PC-9 (cell line): ENCODE measurements at regions of chr19 and their contacts with region 1.

Region 1: GRCh38 chr19:17226002-17226933 is at the start of gene OCEL1:
- DNase-seq: peak; percentile 96
- H3K4me3 ChIP-seq: peak within 1 kb of the TSS; percentile 70
- H3K27ac ChIP-seq: peak within 1 kb of the TSS; percentile 76
- H3K4me1 ChIP-seq: no peaks in the 10 kb centered on the region; the same call in 1 of the 2 replicates
- H3K27me3 ChIP-seq: no peaks in the 10 kb centered on the region
- CTCF ChIP-seq: no peak
- total RNA-seq, gene OCEL1: 30.6 and 34.5 TPM in 2 replicates

Region 2: GRCh38 chr19:16518483-16519229 is 707.6 kb before region 1 on chr19:
- CTCF ChIA-PET with region 1: no interaction called
- POLR2A ChIA-PET with region 1: no interaction called
- intact Hi-C with region 1: no loop called
- DNase-seq: no peak
- H3K4me3 ChIP-seq: no peak overlapping the region
- H3K27ac ChIP-seq: no peak overlapping the region
- H3K4me1 ChIP-seq: no peaks in the 10 kb centered on the region
- H3K27me3 ChIP-seq: no peaks in the 10 kb centered on the region
- CTCF ChIP-seq: no peak; the same call in 1 of the 2 replicates

Region 3: DNA sequence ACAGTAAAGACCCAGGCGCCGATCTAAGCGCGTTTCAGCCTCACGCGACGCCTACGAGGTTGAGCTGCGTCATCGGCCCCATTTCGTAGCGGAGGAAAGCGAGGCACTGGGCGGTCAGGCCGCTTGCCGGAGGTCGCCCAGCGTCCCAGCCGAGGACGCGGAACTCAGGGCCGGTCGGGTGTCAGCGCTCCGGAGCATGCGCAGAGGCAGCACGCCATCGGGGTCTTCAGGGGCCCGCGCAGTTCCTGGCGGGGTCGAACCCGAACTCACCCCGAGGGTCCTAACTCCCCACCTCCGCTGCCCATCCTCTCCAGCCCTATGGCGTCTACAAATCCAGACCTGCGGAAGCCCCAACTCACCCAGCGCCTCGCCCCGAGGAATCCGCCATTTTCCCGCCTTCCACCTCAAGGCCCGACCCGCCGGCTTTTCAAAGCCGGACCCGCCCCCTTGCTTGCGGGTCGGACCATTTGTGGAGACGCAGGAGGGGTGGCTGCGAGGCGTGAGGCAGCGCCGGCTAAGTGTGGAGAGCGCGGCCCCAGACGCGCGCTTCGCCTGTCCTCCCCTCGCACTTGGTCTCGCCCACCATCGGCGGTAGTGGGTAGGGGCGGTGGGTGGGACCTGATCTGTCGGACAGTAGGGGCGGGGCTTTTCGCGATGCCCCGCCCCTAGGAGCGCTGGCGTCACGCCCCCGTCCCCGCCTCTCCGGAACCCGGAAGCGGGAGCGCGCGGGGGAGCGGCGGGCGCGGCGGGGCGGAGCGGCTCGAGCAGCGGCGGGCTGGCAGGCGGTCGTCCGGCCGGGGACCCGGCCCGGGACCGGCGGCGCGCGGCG is 151.0 kb before region 1 on chr19 and contains the starts of genes HAUS8 and MYO9B:
- CTCF ChIA-PET with region 1: no interaction called
- POLR2A ChIA-PET with region 1: no interaction called
- intact Hi-C with region 1: loop called (anchors 5 kb)
- DNase-seq: peak; percentile 97 to 99
- H3K4me3 ChIP-seq: peak within 1 kb of the TSS; percentile 86
- H3K27ac ChIP-seq: peak within 1 kb of the TSS; percentile 47
- H3K4me1 ChIP-seq: peaks cover 46% of the 10 kb centered on the region
- H3K27me3 ChIP-seq: no peaks in the 10 kb centered on the region
- CTCF ChIP-seq: no peak
- total RNA-seq, gene HAUS8: 26.5 and 30.8 TPM in 2 replicates
- total RNA-seq, gene MYO9B: 81.2 and 103 TPM in 2 replicates

Region 4: GRCh38 chr19:17260842-17261325 is 34.6 kb after region 1 on chr19:
- CTCF ChIA-PET with region 1: no interaction called
- POLR2A ChIA-PET with region 1: interaction called, 4 read pairs
- intact Hi-C with region 1: loop called (anchors 5 kb)
- DNase-seq: peak; percentile 87 to 88
- H3K4me3 ChIP-seq: no peak overlapping the region
- H3K27ac ChIP-seq: no peak overlapping the region
- H3K4me1 ChIP-seq: peaks cover 20% of the 10 kb centered on the region
- H3K27me3 ChIP-seq: no peaks in the 10 kb centered on the region
- CTCF ChIP-seq: peak; percentile 96

Region 5: GRCh38 chr19:17266975-17267788 is 40.9 kb after region 1 on chr19 and contains the start of gene BABAM1:
- CTCF ChIA-PET with region 1: no interaction called
- POLR2A ChIA-PET with region 1: interaction called, 25 read pairs
- intact Hi-C with region 1: loop called (anchors 5 kb)
- DNase-seq: peak; percentile 94 to 99
- H3K4me3 ChIP-seq: peak within 1 kb of the TSS; percentile 86
- H3K27ac ChIP-seq: peak within 1 kb of the TSS; percentile 70
- H3K4me1 ChIP-seq: peaks cover 25% of the 10 kb centered on the region
- H3K27me3 ChIP-seq: no peaks in the 10 kb centered on the region
- CTCF ChIP-seq: no peak
- total RNA-seq, gene BABAM1: 127 and 152 TPM in 2 replicates

Region 6: GRCh38 chr19:17370026-17370587 is 143.8 kb after region 1 on chr19:
- CTCF ChIA-PET with region 1: no interaction called
- POLR2A ChIA-PET with region 1: no interaction called
- intact Hi-C with region 1: no loop called
- DNase-seq: no peak
- H3K4me3 ChIP-seq: no peak overlapping the region
- H3K27ac ChIP-seq: no peak overlapping the region
- H3K4me1 ChIP-seq: no peaks in the 10 kb centered on the region
- H3K27me3 ChIP-seq: 0 out of 2 replicates have a peak, but pooled peaks cover 4% of the 10 kb centered on the region
- CTCF ChIP-seq: no peak

Region 7: DNA sequence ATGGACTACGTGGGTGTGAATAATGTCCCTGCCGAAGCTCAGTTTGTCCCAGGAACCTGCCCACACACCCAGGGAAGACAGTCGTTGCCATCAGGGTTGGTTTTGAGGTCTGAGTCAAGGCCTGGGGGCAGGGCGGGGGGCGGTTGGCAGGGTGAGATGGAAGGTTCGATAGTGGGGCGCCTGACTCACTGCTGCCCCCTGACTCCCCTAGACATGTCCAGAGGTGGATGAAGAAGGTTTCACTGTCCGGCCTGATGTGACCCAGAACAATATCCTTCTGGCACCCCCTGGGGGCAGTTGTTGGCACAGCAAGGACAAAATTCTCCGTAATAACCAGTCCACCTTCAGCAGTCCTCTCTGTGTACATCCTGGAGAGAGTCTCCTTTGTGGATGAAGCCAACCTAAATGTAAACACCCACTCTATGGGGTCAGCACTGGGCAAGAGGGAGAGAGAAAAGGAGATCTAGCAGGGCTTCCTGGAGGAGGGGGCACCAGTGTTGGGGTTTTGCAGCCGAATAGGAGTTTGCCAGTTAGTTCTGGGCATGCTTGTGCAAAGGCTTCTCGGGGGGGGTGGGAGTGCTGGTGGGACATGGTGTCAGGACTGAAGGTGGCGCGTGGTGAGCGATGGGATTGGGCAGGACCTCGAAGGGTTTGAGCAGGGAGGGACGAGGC is 549.1 kb after region 1 on chr19:
- CTCF ChIA-PET with region 1: interaction called, 14 read pairs
- POLR2A ChIA-PET with region 1: no interaction called
- intact Hi-C with region 1: no loop called
- DNase-seq: peak; percentile 57 to 70
- H3K4me3 ChIP-seq: no peak overlapping the region
- H3K27ac ChIP-seq: no peak overlapping the region
- H3K4me1 ChIP-seq: peaks cover 18% of the 10 kb centered on the region
- H3K27me3 ChIP-seq: no peaks in the 10 kb centered on the region
- CTCF ChIP-seq: peak; percentile 93

Region 8: GRCh38 chr19:18281082-18282020 is 1055.1 kb after region 1 on chr19 and contains the start of gene JUND:
- CTCF ChIA-PET with region 1: no interaction called
- POLR2A ChIA-PET with region 1: interaction called, 13 read pairs
- intact Hi-C with region 1: no loop called
- DNase-seq: peak; percentile 91 to 99
- H3K4me3 ChIP-seq: peak within 1 kb of the TSS; percentile 93
- H3K27ac ChIP-seq: peak within 1 kb of the TSS; percentile 97
- H3K4me1 ChIP-seq: peaks cover 21% of the 10 kb centered on the region
- H3K27me3 ChIP-seq: no peaks in the 10 kb centered on the region
- CTCF ChIP-seq: no peak
- total RNA-seq, gene JUND: 115 and 150 TPM in 2 replicates